ENCODE measurements at regions of chr7 and their contacts with region 1.

Region 1: DNA sequence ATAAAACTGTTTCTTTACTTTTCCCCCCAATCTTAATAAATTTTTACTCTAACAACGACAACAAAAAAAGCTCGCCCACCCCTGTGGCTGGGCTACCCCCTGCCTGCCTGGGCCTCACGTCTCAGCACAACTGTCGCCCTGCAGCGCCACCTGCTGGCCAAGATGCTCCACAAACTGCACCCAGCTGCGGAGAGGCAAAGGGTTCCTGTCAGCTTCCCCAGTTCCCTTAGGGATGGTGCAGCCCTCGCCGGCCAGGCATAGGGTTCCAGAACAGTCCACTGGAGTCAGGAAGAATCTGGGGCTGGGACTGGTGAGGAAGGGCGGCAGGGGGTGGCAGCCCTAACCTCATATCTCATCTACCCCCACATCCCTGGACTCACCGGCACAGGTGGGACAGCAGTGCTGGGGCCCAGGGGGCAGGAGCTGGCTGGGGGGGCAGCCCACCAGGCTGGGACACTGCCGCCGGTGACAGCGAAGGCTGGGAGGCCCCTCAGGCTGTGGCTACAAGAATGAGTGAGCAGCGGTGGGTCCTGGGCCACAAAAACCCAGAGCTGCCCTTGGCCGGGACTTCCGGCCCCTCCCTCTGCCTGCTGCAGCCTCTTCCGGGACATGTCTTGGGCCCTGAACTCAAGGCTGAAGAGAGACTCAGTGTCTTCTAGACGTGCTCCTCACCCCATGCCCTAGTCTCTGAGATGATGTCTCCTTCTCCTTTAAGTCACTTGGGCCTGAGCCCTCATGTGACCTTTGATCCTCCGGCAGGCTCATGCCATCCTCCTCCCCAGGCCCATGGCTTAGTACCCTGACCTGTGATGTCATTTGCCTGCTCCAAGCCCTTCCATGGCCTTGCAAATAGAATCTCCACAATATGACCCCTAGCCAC is 21.2 kb downstream of the ATP6V1F start:
- DNase-seq: peak; percentile 91
- ATAC-seq: peak; percentile 81
- H3K4me3 Mint-ChIP-seq: peak overlapping the region; percentile 2
- H3K27ac Mint-ChIP-seq: peak overlapping the region; percentile 80
- H3K4me1 Mint-ChIP-seq: peaks cover 20% of the 10 kb centered on the region
- H3K27me3 Mint-ChIP-seq: peaks cover 5% of the 10 kb centered on the region

Region 2: GRCh38 chr7:128425850-128426249 is 458.0 kb before region 1 on chr7:
- CTCF ChIA-PET with region 1: interaction called, 22 read pairs
- DNase-seq: peak; percentile 84
- ATAC-seq: peak; percentile 60
- H3K4me3 Mint-ChIP-seq: no peak overlapping the region
- H3K27ac Mint-ChIP-seq: no peak overlapping the region
- H3K4me1 Mint-ChIP-seq: peaks cover 26% of the 10 kb centered on the region
- H3K27me3 Mint-ChIP-seq: peaks cover 9% of the 10 kb centered on the region

Region 3: DNA sequence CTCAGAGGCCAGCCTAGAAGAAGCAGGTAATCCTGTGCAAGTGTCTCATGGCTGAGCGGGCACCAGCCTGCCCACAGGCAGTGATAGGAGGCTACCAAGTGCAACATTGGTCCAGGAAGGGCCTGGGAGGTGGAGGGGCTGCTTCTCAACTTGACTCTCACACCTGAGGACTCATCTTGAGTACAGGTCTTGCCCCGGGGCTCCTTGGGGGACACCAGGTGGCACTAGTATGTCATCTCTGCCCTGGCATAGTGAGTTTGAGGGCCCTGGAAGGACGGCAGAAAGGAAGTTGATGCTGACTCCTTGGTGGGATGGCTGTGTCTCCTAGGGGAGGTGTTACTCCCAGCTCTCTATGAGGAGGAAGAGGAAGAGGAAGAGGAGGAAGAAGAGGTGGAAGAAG is 89.8 kb before region 1 on chr7:
- CTCF ChIA-PET with region 1: interaction called, 16 read pairs
- DNase-seq: peak; percentile 55
- ATAC-seq: no peak
- H3K4me3 Mint-ChIP-seq: no peak overlapping the region
- H3K27ac Mint-ChIP-seq: peak overlapping the region; percentile 16
- H3K4me1 Mint-ChIP-seq: peaks cover 7% of the 10 kb centered on the region
- H3K27me3 Mint-ChIP-seq: peaks cover 15% of the 10 kb centered on the region

Region 4: DNA sequence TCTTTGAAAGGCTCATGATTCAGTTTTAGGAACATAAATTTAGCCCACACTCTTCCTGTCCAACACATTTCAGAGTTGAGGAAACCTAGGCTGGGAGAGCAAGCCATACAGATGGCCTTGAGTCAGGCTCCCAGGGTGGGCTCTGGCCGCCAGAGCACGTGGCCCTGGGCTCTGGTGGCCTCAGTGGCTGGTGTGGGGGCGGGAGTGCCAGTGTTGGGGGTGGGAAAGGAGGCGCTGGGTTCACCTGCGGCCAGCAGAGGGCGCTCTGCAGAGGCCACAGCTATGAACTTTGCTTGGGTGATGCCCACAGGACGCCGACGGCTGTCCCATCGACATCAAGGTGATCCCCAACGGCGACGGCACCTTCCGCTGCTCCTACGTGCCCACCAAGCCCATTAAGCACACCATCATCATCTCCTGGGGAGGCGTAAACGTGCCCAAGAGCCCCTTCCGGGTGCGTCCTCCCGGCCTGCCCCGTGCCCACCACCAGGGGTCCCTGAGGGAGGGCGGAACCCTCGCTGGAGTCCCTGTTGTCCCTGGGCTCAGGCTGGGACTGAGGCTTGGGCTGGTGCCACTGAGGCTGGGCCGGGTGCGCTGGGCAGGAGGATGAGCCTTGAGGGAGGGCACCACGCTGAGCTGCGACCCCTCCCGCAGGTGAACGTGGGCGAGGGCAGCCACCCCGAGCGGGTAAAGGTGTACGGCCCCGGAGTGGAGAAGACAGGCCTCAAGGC is 41.8 kb before region 1 on chr7:
- CTCF ChIA-PET with region 1: interaction called, 57 read pairs
- DNase-seq: peak; percentile 67
- ATAC-seq: peak; percentile 73
- H3K4me3 Mint-ChIP-seq: no peak overlapping the region
- H3K27ac Mint-ChIP-seq: no peak overlapping the region
- H3K4me1 Mint-ChIP-seq: peaks cover 2% of the 10 kb centered on the region
- H3K27me3 Mint-ChIP-seq: no peaks in the 10 kb centered on the region

Region 5: DNA sequence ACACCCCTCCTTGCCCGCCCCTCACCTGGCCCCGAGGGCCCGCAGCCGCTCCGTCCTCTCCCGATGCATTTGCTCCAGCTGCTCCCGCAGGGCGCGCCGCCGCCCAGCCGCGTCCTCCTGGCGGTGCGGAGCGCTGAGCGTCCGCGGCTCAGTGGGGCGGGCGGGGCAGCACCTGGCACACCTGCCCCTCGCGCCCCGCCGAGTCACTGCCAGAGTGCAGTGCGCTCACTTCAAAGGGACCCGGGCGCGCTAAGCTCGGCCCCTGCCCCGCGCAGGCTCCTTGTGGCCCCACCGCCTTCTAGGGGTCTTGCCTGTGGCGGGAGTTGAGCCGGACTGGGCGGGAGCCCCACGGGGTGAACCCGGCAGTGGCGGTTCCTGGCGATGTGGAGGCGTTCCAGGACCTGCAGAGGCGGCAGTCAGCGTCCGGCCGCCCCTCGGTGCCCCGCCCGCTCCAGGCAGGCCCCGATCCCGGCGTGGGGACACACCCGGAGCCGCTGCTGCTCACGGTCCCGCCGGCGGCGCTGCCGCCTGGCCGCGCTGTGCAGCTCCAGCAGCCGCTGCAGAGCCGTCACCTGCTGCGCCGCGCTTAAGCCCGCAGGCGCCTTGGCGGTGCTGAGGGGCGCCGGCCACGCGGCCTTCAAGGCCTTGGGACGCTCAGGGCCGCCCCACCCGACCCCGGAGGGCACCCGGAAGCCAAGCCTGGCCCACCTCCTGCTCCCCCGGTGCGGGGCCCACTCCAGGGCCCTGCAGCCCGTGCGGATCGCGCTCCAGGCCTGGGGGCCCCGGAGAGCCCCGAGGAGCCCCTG is 14.5 kb before region 1 on chr7:
- CTCF ChIA-PET with region 1: interaction called, 107 read pairs
- DNase-seq: peak; percentile 57
- ATAC-seq: peak; percentile 91
- H3K4me3 Mint-ChIP-seq: peak overlapping the region; percentile 43
- H3K27ac Mint-ChIP-seq: no peak overlapping the region
- H3K4me1 Mint-ChIP-seq: peaks cover 5% of the 10 kb centered on the region
- H3K27me3 Mint-ChIP-seq: peaks cover 25% of the 10 kb centered on the region

Region 6: DNA sequence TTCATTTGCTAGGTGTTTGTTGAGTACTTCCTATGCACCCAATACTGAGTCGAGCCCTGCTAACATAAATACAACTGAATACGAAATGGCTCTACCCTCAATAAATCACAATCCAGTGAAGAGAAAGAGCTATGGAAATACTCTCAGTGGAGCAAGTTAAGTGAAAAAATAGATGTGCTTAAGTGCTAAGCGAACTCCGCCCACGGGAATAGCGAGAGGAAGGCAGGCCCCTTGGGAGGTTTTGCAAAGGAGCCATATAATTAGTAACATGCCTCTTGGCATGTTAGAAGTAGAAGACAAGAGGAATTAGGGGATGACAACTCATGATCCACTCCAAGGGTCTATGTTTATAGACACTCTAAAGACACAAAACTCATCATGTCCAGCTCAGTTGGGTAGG is 217.9 kb after region 1 on chr7:
- CTCF ChIA-PET with region 1: no interaction called
- DNase-seq: no peak
- ATAC-seq: no peak
- H3K4me3 Mint-ChIP-seq: no peak overlapping the region
- H3K27ac Mint-ChIP-seq: no peak overlapping the region
- H3K4me1 Mint-ChIP-seq: no peaks in the 10 kb centered on the region
- H3K27me3 Mint-ChIP-seq: peaks cover 22% of the 10 kb centered on the region

Measured in activated CD8-positive, alpha-beta memory T cell treated with anti-CD3 and anti-CD28 coated beads, Interleukin-2, amount 10 ng/mL, durations not matched to agents 7 days and 5 days (primary cell).